Thyroid gland (tissue), 4 donors: ENCODE measurements at regions of chr2 and their contacts with region 1.

Region 1: GRCh38 chr2:64485961-64486360 is 32.0 kb downstream of the LGALSL start:
- DNase-seq: peak; percentile 23 to 27
- H3K4me3 ChIP-seq: no peak overlapping the region
- H3K27ac ChIP-seq: no peak overlapping the region
- H3K4me1 ChIP-seq: peaks cover 0 to 12% of the 10 kb centered on the region in 2 donors
- H3K27me3 ChIP-seq: no peaks in the 10 kb centered on the region
- CTCF ChIP-seq: no peak
- POLR2A ChIP-seq: no peak

Region 2: GRCh38 chr2:64330281-64331113 is 155.5 kb before region 1 on chr2:
- intact Hi-C with region 1: loop called (anchors 2 kb)
- DNase-seq: peak; percentile 72 to 84
- H3K4me3 ChIP-seq: no peak overlapping the region
- H3K27ac ChIP-seq: peak overlapping the region in 2 of 3 donors; percentile 27 to 53
- H3K4me1 ChIP-seq: peaks cover 4 to 14% of the 10 kb centered on the region in 2 donors
- H3K27me3 ChIP-seq: no peaks in the 10 kb centered on the region
- CTCF ChIP-seq: peak; percentile 84 to 96 (median 88)
- POLR2A ChIP-seq: no peak